ENCODE measurements at regions of chr3 and their contacts with region 1.

Region 1: DNA sequence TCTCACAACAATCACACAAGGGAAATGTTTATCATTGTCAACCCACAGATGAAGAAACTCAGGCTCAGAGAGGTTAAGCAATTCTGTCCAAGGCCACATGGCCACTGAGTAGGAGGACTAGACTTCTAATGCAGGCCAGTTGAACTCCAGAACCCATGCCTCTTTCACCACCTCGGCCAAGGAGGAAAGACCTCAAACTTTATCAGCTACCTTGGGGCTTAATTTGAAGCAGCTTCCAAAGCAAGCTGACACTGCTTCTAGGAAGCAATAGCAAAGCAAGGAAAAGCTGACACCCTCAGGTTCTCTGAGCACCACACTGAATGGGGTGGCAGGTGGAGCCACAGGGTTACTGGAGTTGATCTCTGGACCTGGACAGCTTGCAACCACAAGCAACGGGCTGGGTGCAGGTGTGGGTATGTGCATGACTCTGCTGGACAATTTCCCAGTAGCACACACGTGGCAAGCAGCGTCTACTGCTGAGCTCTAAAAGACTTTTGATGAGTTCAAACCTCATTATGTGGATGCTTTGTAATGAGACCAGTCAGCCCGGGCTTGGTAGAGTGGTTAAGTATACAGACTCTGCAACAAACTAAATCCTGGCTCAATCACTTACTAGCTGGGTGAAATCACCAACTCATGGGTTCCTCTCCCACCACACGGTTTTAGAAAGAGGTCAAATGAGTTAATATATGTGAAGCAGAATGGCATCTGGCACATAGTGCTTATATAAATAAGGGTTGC is 23.1 kb downstream of the CCNL1 start:
- DNase-seq: no peak
- H3K4me3 Mint-ChIP-seq: no peak overlapping the region
- H3K27ac Mint-ChIP-seq: peak overlapping the region; percentile 81
- H3K4me1 Mint-ChIP-seq: peaks cover 62% of the 10 kb centered on the region
- H3K27me3 Mint-ChIP-seq: no peaks in the 10 kb centered on the region

Region 2: GRCh38 chr3:156151824-156152428 is 984.9 kb before region 1 on chr3:
- CTCF ChIA-PET with region 1: interaction called, 12 read pairs
- POLR2A ChIA-PET with region 1: no interaction called
- DNase-seq: peak; percentile 60
- H3K4me3 Mint-ChIP-seq: no peak overlapping the region
- H3K27ac Mint-ChIP-seq: no peak overlapping the region
- H3K4me1 Mint-ChIP-seq: peaks cover 5% of the 10 kb centered on the region
- H3K27me3 Mint-ChIP-seq: peaks cover 15% of the 10 kb centered on the region

Region 3: DNA sequence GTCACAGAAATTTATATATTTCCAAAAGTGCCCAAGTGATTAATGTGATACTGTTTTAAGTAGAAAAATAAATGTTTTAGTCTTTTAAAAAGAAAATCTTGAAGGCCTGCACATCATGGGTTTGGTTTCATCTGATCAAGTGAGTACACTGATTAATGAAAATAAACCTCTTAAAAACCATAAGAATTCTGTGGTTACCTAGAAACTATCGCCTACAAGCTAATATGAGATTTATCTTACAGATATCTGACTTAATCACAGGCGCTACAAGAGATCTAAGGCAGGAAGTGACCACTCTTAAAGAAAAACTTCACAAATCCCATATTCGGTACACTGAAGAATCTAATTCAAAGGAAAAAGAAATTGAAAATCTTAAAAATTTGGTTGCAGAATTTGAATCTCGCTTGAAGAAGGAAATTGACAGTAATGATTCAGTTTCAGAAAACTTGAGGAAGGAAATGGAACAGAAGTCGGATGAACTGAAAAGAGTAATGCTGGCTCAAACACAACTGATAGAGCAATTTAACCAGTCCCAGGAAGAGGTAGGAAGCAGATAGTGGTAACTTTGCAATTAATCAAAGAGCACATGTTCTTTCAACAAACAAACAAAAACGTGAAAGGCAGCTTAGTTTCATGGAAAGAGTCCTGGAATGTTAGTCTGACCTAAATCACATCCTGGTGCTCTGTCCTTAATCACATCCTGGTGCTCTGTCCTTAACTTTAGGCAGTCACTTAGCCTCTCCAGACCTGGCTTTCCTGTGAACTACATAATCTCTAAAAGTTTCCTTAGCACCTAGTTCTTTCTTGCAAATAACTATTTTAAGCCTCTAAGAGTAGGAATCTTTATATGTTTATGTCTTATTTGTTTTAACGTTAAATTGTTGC is 108.7 kb before region 1 on chr3:
- CTCF ChIA-PET with region 1: no interaction called
- POLR2A ChIA-PET with region 1: no interaction called
- DNase-seq: no peak
- H3K4me3 Mint-ChIP-seq: no peak overlapping the region
- H3K27ac Mint-ChIP-seq: no peak overlapping the region
- H3K4me1 Mint-ChIP-seq: peaks cover 6% of the 10 kb centered on the region
- H3K27me3 Mint-ChIP-seq: peaks cover 28% of the 10 kb centered on the region

Region 4: DNA sequence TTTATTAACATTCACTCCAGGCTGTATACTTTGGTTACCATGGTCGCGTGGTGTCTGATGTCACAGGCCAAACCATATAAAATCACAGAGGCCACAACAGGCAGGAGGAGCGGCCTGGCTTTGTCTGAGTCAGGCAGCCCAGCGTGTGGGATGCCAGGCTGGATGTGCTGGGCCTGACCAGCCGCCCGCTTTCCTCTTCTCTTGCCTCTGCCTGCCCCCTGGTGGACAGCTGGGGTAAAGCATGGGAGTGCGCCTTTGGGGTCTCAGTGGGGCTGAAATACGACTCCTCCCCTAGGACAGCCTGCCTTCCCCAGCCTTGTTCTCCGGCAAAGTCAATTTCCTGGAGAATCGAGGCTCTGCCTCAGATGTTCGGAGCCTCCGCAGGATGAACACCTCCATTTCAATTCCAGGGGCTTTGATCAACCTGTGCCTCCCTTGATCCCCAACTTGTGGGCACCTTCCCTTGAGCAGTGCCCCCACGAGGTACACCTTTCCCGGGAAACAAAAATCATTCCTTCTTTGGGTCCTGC is 55.1 kb before region 1 on chr3:
- CTCF ChIA-PET with region 1: interaction called, 10 read pairs
- POLR2A ChIA-PET with region 1: interaction called, 4 read pairs
- DNase-seq: peak; percentile 88
- H3K4me3 Mint-ChIP-seq: no peak overlapping the region
- H3K27ac Mint-ChIP-seq: peak overlapping the region; percentile 58
- H3K4me1 Mint-ChIP-seq: peaks cover 49% of the 10 kb centered on the region
- H3K27me3 Mint-ChIP-seq: no peaks in the 10 kb centered on the region

Region 5: DNA sequence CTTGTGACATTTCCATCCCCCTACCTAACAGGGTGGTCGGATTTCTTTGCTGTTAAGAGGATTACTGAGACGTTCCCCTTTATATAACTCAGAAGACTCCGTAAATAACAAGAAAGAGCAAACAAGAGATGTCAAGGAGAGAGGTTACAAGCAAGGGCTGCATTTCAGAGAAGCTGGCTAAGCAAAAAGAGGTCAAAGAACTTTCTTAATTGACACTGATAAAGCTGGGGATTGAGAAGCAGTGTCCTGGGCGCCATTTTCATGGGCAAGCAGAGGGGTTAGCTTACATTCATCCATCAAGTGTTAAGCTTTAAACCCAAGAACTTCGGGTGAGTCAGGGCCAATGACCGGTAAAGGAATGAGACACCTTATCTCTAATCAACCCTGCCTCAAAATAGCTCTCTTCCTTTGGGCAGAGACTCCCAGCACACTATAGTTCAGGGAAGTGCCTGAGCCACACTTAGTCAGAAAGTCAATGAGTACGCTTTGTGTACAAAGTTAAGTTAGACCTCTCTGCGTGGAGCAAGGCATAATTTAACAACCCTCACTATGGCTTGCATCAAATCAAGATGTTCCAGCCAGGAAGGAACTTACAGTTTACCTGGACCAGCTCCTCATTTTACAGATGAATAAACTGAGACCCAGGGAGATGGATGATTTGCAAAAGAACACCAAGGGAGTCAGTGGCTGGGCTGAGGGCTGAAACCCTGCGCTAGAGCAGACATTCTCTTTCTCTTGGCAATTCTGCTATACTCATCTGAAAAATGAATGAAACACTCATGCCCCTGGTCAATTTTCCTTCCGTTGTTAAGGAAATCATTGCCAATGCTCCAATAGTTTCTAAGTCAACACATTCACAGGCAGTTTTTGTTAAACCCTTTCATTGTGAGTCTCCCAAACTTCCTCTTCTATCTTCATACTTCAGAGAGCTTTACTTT is 21.5 kb before region 1 on chr3:
- CTCF ChIA-PET with region 1: interaction called, 160 read pairs
- POLR2A ChIA-PET with region 1: no interaction called
- DNase-seq: no peak
- H3K4me3 Mint-ChIP-seq: no peak overlapping the region
- H3K27ac Mint-ChIP-seq: no peak overlapping the region
- H3K4me1 Mint-ChIP-seq: peaks cover 15% of the 10 kb centered on the region
- H3K27me3 Mint-ChIP-seq: peaks cover 11% of the 10 kb centered on the region

Region 6: GRCh38 chr3:157159762-157160657 is 23.2 kb after region 1 on chr3 and contains the start of gene CCNL1:
- CTCF ChIA-PET with region 1: interaction called, 10 read pairs
- POLR2A ChIA-PET with region 1: no interaction called
- DNase-seq: peak; percentile 95
- H3K4me3 Mint-ChIP-seq: peak within 1 kb of the TSS; percentile 97
- H3K27ac Mint-ChIP-seq: peak within 1 kb of the TSS; percentile 100
- H3K4me1 Mint-ChIP-seq: peaks cover 56% of the 10 kb centered on the region
- H3K27me3 Mint-ChIP-seq: no peaks in the 10 kb centered on the region
- total RNA-seq, gene CCNL1: 220 to 258 TPM